ENCODE measurements at regions of chr15 and their contacts with region 1.

Region 1: GRCh38 chr15:75508840-75509532 is 57.5 kb upstream of the SIN3A start:
- DNase-seq: peak; percentile 61
- H3K4me3 ChIP-seq: no peak overlapping the region
- H3K27ac ChIP-seq: no peak overlapping the region
- H3K4me1 ChIP-seq: no peaks in the 10 kb centered on the region
- H3K27me3 ChIP-seq: no peaks in the 10 kb centered on the region
- CTCF ChIP-seq: peak; percentile 61

Region 2: DNA sequence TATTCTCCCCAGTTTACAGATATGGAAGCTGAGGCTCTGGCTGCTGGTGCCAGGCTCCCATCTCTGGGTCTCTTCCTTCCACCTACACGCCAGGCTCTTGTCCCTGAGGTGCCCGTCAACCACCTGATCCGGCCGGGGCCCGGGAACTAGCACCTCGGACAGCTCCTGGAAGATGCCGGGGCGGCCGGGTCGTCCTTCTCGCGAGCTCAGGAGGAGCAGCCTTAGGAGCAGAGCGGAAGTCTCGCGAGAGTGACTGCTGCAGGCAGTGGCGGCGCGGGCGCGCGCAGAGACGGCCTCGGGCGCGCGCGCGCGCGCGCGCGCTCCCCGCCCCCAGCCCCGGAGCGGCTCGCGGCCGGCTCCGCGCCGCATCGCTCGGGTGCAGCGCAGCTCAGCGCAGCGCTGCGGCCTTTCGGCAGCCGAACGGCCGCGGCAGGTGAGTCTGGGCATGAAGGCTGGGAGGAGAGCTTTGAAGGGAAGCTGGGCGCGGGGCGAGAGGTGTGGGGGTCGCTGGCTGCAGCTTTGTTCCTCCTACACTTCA is 513.7 kb before region 1 on chr15 and contains the start of gene SCAMP5:
- CTCF ChIA-PET with region 1: no interaction called
- POLR2A ChIA-PET with region 1: no interaction called
- intact Hi-C with region 1: no loop called
- DNase-seq: peak; percentile 95
- H3K4me3 ChIP-seq: peak within 1 kb of the TSS; percentile 60
- H3K27ac ChIP-seq: no peak within 1 kb of the TSS
- H3K4me1 ChIP-seq: peaks cover 5% of the 10 kb centered on the region
- H3K27me3 ChIP-seq: peaks cover 11% of the 10 kb centered on the region
- CTCF ChIP-seq: no peak
- total RNA-seq, gene SCAMP5: 3.8 and 5.8 TPM in 2 replicates

Region 3: DNA sequence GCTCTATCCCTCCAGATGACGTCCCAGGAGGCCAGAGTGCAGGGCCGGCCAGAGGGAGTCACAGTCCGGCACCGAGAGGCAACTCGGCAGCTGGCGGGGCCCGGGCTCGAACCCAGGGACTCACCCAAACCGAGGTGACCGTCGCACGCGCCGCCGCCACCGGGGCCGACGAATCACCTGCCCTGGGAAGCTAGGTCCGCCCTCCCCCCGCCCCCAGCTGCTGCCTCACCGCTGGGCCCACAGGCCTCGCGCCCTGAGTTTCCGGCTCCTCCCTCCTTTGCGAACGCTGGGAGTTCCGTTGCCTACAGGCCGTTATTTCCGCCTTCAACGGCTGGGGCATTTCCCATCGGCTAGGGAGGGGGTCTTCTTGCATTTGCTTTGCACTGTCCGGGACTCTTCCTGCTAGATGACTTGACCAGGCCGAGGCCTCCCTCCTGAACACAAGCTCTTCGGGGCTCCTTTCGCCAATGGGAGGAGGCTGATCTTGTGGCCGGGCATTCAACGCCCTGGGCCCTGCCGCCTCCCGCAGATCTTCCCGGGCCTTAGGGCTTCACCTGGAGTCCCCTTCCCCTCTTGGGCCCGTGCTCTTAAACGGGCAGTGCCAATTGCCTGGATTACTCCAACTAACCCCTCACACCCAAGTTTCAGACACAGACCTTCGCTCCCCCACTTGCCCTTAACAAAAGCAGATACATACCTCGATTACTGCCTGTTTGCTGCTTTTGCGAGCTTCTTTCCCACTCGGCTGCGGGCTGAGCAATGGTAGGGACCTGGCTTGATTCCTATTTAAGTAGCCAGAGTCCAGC is 116.8 kb after region 1 on chr15 and contains the start of gene SNUPN:
- CTCF ChIA-PET with region 1: no interaction called
- POLR2A ChIA-PET with region 1: no interaction called
- intact Hi-C with region 1: loop called (anchors 10 kb)
- DNase-seq: peak; percentile 98
- H3K4me3 ChIP-seq: peak within 1 kb of the TSS; percentile 98
- H3K27ac ChIP-seq: peak within 1 kb of the TSS; percentile 99
- H3K4me1 ChIP-seq: peaks cover 16% of the 10 kb centered on the region
- H3K27me3 ChIP-seq: no peaks in the 10 kb centered on the region
- CTCF ChIP-seq: no peak
- total RNA-seq, gene SNUPN: 32.8 and 34.6 TPM in 2 replicates

Region 4: GRCh38 chr15:75639709-75640482 is 130.9 kb after region 1 on chr15 and contains the start of gene IMP3:
- CTCF ChIA-PET with region 1: interaction called, 6 read pairs
- POLR2A ChIA-PET with region 1: interaction called, 28 read pairs
- intact Hi-C with region 1: loop called (anchors 5 kb)
- DNase-seq: peak; percentile 99
- H3K4me3 ChIP-seq: peak within 1 kb of the TSS; percentile 75
- H3K27ac ChIP-seq: peak within 1 kb of the TSS; percentile 88
- H3K4me1 ChIP-seq: peaks cover 15% of the 10 kb centered on the region
- H3K27me3 ChIP-seq: no peaks in the 10 kb centered on the region
- CTCF ChIP-seq: no peak
- total RNA-seq, gene IMP3: 76.5 and 84.5 TPM in 2 replicates

Region 5: DNA sequence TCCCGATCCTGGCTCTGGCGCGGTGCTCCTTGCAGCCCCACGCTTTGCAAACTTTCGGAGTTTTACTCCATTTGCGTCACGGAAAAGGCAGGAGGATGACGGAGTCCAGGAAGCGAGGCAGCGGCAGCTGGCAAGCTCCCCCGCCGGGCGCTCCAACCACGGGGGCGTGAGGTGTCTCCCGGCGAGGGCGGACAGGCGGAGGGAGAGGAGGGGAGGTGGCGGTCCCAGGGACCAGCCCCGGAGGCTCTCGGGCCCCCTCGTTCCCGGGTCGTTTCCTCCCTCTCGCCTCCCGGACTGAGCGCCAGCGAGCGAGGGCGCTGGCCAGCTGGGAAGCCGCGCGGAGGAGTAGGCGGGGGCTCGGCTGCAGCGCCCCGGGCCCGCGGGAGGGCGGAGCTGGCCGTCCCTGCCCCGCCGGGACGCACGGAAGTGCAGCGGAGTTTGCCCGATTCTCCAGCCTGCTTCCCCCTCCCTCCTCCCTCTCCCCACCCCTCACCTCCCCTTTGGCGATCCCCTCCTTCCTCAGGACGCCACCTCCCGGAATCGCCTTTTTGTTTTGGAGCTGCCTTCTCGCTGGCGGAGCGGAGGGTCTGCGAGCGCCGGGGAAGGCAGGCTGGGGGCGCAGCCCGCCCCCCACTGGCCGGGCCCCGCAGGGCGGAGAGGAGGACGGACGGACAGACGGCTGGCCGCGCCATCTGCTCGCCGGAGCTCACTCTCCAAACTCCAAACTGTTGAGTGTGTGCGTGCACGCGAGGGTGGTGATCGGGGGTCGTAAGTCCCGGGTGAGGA is 138.6 kb after region 1 on chr15 and contains the start of gene SNX33:
- CTCF ChIA-PET with region 1: no interaction called
- POLR2A ChIA-PET with region 1: no interaction called
- intact Hi-C with region 1: loop called (anchors 5 kb)
- DNase-seq: peak; percentile 77
- H3K4me3 ChIP-seq: peak within 1 kb of the TSS; percentile 96
- H3K27ac ChIP-seq: peak within 1 kb of the TSS; percentile 76
- H3K4me1 ChIP-seq: peaks cover 6% of the 10 kb centered on the region
- H3K27me3 ChIP-seq: no peaks in the 10 kb centered on the region
- CTCF ChIP-seq: peak; percentile 66
- total RNA-seq, gene SNX33: 3.4 and 5.6 TPM in 2 replicates

Measured in A673 (cell line).